ENCODE measurements at regions of chr2 and their contacts with region 1.

Region 1: DNA sequence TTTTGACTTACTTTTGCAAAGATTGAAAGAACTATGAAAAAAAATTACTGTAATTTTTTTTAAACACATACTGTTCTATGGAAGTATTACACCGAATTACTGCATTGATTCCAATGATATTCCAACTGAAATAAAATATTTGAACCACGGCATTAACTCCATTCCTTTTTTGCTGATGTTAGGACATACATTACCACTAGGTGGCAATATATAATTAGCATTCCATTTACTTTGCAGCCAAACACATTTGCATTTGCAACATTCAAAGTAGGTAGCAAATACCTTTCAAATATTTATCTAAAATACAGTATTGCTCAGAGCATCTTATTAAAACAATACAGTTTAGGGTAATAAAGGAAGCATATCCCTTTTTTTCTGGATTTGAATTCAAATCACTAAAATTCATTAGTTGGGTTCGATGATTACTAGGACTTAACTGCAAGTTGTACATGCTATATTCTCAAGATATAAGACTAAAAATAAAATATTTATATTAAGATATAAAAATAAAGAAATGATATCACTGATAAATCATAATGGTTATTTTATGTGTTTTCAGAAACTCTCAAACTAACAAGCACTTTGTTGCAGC is 31.3 kb downstream of the LANCL1 start:
- DNase-seq: peak; percentile 57
- ATAC-seq: no peak; the same call in 1 of the 2 replicates
- H3K4me3 ChIP-seq: no peak overlapping the region
- H3K27ac ChIP-seq: no peak overlapping the region
- H3K4me1 ChIP-seq: no peaks in the 10 kb centered on the region
- H3K27me3 ChIP-seq: no peaks in the 10 kb centered on the region
- CTCF ChIP-seq: peak; percentile 84

Region 2: GRCh38 chr2:210476194-210477128 is 31.2 kb after region 1 on chr2 and contains the start of gene LANCL1:
- CTCF ChIA-PET with region 1: no interaction called
- POLR2A ChIA-PET with region 1: no interaction called
- intact Hi-C with region 1: loop called (anchors 2 kb)
- DNase-seq: peak; percentile 88
- ATAC-seq: peak; percentile 99
- H3K4me3 ChIP-seq: peak within 1 kb of the TSS; percentile 91
- H3K27ac ChIP-seq: no peak within 1 kb of the TSS
- H3K4me1 ChIP-seq: peaks cover 11% of the 10 kb centered on the region; the same call in 1 of the 2 replicates
- H3K27me3 ChIP-seq: no peaks in the 10 kb centered on the region
- CTCF ChIP-seq: no peak
- total RNA-seq, gene LANCL1: 16.0 and 19.0 TPM in 2 replicates

Region 3: GRCh38 chr2:210503001-210503623 is 57.9 kb after region 1 on chr2:
- CTCF ChIA-PET with region 1: no interaction called
- POLR2A ChIA-PET with region 1: no interaction called
- intact Hi-C with region 1: no loop called
- DNase-seq: peak; percentile 72
- ATAC-seq: peak; percentile 94
- H3K4me3 ChIP-seq: peak overlapping the region; percentile 52
- H3K27ac ChIP-seq: no peak overlapping the region
- H3K4me1 ChIP-seq: no peaks in the 10 kb centered on the region
- H3K27me3 ChIP-seq: no peaks in the 10 kb centered on the region
- CTCF ChIP-seq: peak; percentile 95